ENCODE measurements at regions of chr9 and their contacts with region 1.

Region 1: DNA sequence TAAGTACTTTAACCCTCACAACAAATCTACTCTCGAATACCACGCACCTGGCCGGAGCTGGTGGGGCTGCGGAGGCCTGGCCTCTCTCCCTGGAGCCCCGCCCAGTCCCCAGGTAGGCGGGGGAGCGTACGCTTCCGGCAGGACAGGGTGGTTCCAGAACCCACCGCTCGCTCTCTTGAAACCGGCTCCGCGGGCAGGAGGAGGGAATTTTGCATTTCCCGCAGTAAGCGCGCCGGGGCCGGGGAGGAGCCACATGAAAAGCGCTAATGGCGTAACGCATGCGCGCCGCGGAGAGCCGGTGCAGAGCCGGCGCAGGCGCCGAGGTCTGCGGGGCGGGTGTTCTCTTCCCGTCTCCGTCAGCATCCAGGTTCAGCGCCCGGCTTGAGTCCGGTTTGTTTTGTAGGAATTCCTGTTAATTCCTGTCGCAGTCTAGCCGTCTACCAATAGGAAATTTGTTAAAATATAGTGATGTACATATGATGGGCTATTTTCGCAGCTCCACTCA is 20.8 kb downstream of the CAVIN4 start:
- DNase-seq: peak; percentile 77
- H3K4me3 ChIP-seq: peak overlapping the region; percentile 40 to 70 (median 41)
- H3K27ac ChIP-seq: no peak overlapping the region
- H3K4me1 ChIP-seq: peaks cover 12% of the 10 kb centered on the region
- H3K27me3 ChIP-seq: no peaks in the 10 kb centered on the region
- CTCF ChIP-seq: no peak
- POLR2A ChIP-seq: peak; percentile 74

Region 2: DNA sequence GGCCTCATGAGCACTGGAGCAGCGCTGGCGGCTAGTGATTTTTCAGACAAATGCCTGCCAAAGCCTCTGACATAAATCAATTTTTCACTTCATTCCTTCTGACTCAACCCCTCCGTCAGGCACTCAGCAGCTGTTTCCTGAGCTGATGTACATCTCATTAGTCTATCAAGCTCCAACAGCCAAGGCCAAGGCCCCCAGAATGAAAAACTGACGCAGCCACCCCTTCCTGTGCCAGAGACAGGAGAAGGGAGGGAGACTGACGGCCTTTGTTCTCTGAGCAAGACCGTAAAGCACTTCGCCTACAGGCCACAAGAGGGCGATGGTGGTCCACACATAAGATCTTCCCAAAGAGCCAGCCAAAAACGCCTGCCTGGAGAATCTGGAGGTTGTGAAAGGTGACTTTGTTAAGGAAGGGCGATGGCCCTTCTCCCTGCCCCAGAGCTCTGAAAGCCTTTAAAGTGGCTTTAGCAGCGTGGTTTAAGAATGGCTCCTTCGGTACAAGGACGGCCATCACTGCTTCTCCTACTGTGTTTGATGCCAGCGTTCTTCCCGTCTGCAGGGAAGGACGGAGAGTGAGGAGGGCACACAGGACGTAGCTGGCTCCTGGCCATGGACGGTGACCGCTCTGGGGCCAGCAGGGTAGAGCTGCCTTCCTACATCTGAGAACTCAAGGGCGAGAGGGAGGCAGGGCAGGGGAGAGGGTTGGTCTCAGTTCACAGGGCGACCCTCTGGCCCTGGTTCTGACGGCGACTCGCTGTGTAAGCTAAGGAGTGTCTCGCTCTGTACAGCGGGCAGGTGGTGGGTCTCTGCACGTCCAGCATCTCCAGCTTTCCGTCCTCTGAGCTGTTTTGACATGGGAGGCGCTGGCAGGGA is 1414.0 kb before region 1 on chr9:
- CTCF ChIA-PET with region 1: interaction called, 11 read pairs
- POLR2A ChIA-PET with region 1: no interaction called
- dilution Hi-C with region 1: no loop called
- intact Hi-C with region 1: loop called (anchors 1 kb)
- DNase-seq: peak; percentile 99
- H3K4me3 ChIP-seq: peak overlapping the region in 2 of 3 experiments; percentile 20 to 25
- H3K27ac ChIP-seq: peak overlapping the region; percentile 88
- H3K4me1 ChIP-seq: peaks cover 10% of the 10 kb centered on the region
- H3K27me3 ChIP-seq: peaks cover 3 to 5% of the 10 kb centered on the region in 2 experiments
- CTCF ChIP-seq: peak; percentile 94 to 97
- POLR2A ChIP-seq: peak; percentile 50

Region 3: GRCh38 chr9:100222674-100223073 is 376.0 kb before region 1 on chr9:
- CTCF ChIA-PET with region 1: interaction called, 4 read pairs
- POLR2A ChIA-PET with region 1: no interaction called
- dilution Hi-C with region 1: no loop called
- intact Hi-C with region 1: loop called (anchors 2 kb)
- DNase-seq: peak; percentile 53
- H3K4me3 ChIP-seq: no peak overlapping the region
- H3K27ac ChIP-seq: no peak overlapping the region
- H3K4me1 ChIP-seq: no peaks in the 10 kb centered on the region
- H3K27me3 ChIP-seq: no peaks in the 10 kb centered on the region
- CTCF ChIP-seq: peak; percentile 10 to 13
- POLR2A ChIP-seq: no peak

Region 4: DNA sequence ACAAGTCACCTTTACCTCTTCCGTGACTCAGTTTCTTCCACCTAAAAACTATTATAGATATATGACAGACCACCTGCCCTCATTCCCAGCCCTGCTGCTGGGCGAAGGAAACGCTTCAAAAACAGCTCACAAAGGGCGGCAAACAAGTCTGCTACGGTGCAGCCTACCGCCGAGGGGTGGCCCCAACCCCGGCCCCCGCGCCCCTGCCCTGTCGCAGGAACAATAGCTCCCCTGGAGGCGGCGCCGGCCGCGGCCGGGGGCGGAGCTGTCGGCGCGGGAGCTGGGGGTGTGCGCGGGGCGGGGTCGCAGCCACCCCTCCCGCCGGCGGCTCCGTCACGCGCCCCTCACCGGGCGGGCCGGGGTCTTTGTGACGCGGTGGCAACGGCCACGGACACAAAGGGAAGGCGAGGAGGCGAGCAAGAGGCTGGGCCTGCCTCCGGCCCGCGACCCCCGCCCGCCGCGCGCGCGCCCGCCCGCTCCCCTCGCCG is 125.9 kb before region 1 on chr9 and contains the start of gene TMEFF1:
- CTCF ChIA-PET with region 1: interaction called, 5 read pairs
- POLR2A ChIA-PET with region 1: no interaction called
- dilution Hi-C with region 1: no loop called
- intact Hi-C with region 1: loop called (anchors 1 kb)
- DNase-seq: peak; percentile 61
- H3K4me3 ChIP-seq: peak within 1 kb of the TSS; percentile 49 to 85 (median 51)
- H3K27ac ChIP-seq: no peak within 1 kb of the TSS
- H3K4me1 ChIP-seq: peaks cover 3% of the 10 kb centered on the region
- H3K27me3 ChIP-seq: no peaks in the 10 kb centered on the region
- CTCF ChIP-seq: no peak
- POLR2A ChIP-seq: no peak
- total RNA-seq, gene TMEFF1: 9.8 and 14.6 TPM in 2 replicates

Region 5: GRCh38 chr9:100730086-100730485 is 131.4 kb after region 1 on chr9:
- CTCF ChIA-PET with region 1: no interaction called
- POLR2A ChIA-PET with region 1: no interaction called
- dilution Hi-C with region 1: no loop called
- intact Hi-C with region 1: no loop called
- DNase-seq: no peak
- H3K4me3 ChIP-seq: no peak overlapping the region
- H3K27ac ChIP-seq: no peak overlapping the region
- H3K4me1 ChIP-seq: no peaks in the 10 kb centered on the region
- H3K27me3 ChIP-seq: no peaks in the 10 kb centered on the region
- CTCF ChIP-seq: no peak
- POLR2A ChIP-seq: no peak

Region 6: DNA sequence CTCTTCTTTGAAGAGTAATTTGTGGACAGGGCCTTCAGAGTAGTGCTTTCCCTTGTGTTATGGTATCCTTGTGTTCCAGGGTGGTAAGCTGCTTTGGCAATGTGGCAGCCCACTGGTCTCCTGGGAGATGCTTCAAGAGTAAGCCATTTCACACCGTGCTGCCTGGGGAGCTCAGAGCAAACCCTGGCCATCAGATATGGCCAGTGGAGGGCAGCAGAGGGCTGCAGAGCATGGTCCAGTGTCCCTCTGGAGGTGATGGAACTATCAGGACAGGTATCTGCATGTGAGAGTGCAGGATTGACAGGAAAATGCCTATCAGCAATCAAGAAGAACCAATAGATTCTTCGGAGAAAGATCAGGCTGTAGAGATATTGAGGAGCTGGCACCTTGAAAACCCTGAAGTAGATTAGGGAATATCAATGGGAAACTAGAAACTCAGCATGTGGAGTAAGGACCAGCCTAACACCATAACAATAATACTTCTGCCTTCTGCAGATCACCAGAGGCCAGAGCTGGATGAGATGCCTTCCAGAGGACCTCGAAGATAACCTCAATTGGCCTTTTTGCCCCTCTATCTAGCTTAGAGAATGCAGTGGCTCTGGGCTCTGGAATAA is 520.6 kb after region 1 on chr9:
- CTCF ChIA-PET with region 1: interaction called, 21 read pairs
- POLR2A ChIA-PET with region 1: no interaction called
- dilution Hi-C with region 1: no loop called
- intact Hi-C with region 1: loop called (anchors 1 kb)
- DNase-seq: peak; percentile 64
- H3K4me3 ChIP-seq: no peak overlapping the region
- H3K27ac ChIP-seq: peak overlapping the region; percentile 12
- H3K4me1 ChIP-seq: peaks cover 40% of the 10 kb centered on the region
- H3K27me3 ChIP-seq: no peaks in the 10 kb centered on the region
- CTCF ChIP-seq: peak; percentile 85 to 91
- POLR2A ChIP-seq: no peak

Region 7: GRCh38 chr9:101398068-101398929 is 799.6 kb after region 1 on chr9 and contains the starts of genes MRPL50 and ZNF189:
- CTCF ChIA-PET with region 1: interaction called, 3 read pairs
- POLR2A ChIA-PET with region 1: no interaction called
- dilution Hi-C with region 1: no loop called
- intact Hi-C with region 1: loop called (anchors 5 kb)
- DNase-seq: peak; percentile 99
- H3K4me3 ChIP-seq: peak within 1 kb of the TSS; percentile 66 to 97 (median 92)
- H3K27ac ChIP-seq: peak within 1 kb of the TSS; percentile 87
- H3K4me1 ChIP-seq: peaks cover 26% of the 10 kb centered on the region
- H3K27me3 ChIP-seq: no peaks in the 10 kb centered on the region
- CTCF ChIP-seq: no peak
- POLR2A ChIP-seq: peak; percentile 78
- total RNA-seq, gene MRPL50: 8.6 and 9.7 TPM in 2 replicates
- total RNA-seq, gene ZNF189: 14.4 and 14.6 TPM in 2 replicates